MCF 10A (cell line): ENCODE measurements at regions of chr2 and their contacts with region 1.

Region 1: GRCh38 chr2:85888684-85889626 is at the start of gene ST3GAL5:
- DNase-seq: peak; percentile 76
- H3K4me3 Mint-ChIP-seq: peak within 1 kb of the TSS; percentile 90
- H3K27ac Mint-ChIP-seq: no peak within 1 kb of the TSS
- H3K4me1 Mint-ChIP-seq: peaks cover 36% of the 10 kb centered on the region
- H3K27me3 Mint-ChIP-seq: no peaks in the 10 kb centered on the region
- CTCF ChIP-seq: peak; percentile 50
- total RNA-seq, gene ST3GAL5: 1.2 and 2.3 TPM in 2 replicates

Region 2: DNA sequence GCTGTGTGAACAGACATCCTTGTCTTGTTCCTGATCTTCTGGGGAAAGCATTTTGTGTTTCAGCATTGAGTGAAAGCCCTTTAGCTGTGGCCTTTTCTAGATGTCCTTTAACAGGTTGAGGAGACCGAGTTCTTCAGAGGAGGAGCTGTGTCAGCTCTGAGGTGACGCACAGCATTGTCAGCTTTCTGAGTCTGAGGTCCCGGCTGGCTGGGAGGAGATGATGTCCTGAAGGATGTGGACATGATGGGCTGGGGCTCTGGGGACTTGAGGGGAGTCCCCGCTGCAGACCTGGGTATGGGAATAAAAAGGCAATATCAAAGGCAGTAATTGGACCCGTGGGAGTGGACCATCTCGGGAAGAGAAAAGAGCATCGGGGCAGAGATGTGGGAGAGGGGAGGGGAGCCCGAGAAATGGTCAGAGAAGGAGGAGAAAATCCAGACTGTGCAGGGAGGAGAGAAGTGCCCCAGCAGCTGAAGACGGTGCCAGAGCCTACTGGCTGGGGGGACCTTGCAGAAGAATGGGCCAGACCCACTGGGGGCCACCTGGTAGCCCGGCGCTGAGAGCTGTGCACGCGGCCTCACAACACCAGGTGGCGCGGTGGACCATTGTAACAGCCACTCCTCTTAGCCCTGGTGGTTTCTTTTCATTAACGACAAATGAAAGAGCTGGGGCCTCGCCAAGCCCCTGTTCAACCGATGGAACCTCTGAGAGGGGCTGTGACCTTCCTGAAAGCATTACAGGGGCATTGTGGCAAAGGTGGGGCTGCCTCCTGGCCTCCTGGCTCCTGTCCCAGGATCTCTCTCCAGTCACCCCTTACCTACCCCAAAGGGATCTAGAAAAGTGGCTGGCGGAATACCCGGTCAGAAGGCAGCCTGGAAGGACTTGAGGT is 61.7 kb before region 1 on chr2:
- CTCF ChIA-PET with region 1: interaction called, 19 read pairs
- POLR2A ChIA-PET with region 1: interaction called, 7 read pairs
- intact Hi-C with region 1: loop called (anchors 1 kb)
- DNase-seq: peak; percentile 74
- H3K4me3 Mint-ChIP-seq: no peak overlapping the region
- H3K27ac Mint-ChIP-seq: no peak overlapping the region
- H3K4me1 Mint-ChIP-seq: peaks cover 5% of the 10 kb centered on the region
- H3K27me3 Mint-ChIP-seq: peaks cover 7% of the 10 kb centered on the region
- CTCF ChIP-seq: peak; percentile 90

Region 3: GRCh38 chr2:85997017-85997970 is 108.3 kb after region 1 on chr2:
- CTCF ChIA-PET with region 1: interaction called, 15 read pairs
- POLR2A ChIA-PET with region 1: no interaction called
- intact Hi-C with region 1: no loop called
- DNase-seq: no peak
- H3K4me3 Mint-ChIP-seq: no peak overlapping the region
- H3K27ac Mint-ChIP-seq: no peak overlapping the region
- H3K4me1 Mint-ChIP-seq: peaks cover 10% of the 10 kb centered on the region
- H3K27me3 Mint-ChIP-seq: no peaks in the 10 kb centered on the region
- CTCF ChIP-seq: no peak

Region 4: GRCh38 chr2:86020984-86021383 is 132.0 kb after region 1 on chr2:
- CTCF ChIA-PET with region 1: interaction called, 7 read pairs
- POLR2A ChIA-PET with region 1: interaction called, 6 read pairs
- intact Hi-C with region 1: loop called (anchors 5 kb)
- DNase-seq: no peak
- H3K4me3 Mint-ChIP-seq: no peak overlapping the region
- H3K27ac Mint-ChIP-seq: no peak overlapping the region
- H3K4me1 Mint-ChIP-seq: peaks cover 15% of the 10 kb centered on the region
- H3K27me3 Mint-ChIP-seq: no peaks in the 10 kb centered on the region
- CTCF ChIP-seq: no peak

Region 5: GRCh38 chr2:86035883-86036668 is 147.1 kb after region 1 on chr2:
- CTCF ChIA-PET with region 1: interaction called, 20 read pairs
- POLR2A ChIA-PET with region 1: interaction called, 4 read pairs
- intact Hi-C with region 1: no loop called
- DNase-seq: peak; percentile 17
- H3K4me3 Mint-ChIP-seq: no peak overlapping the region
- H3K27ac Mint-ChIP-seq: peak overlapping the region; percentile 65
- H3K4me1 Mint-ChIP-seq: peaks cover 5% of the 10 kb centered on the region
- H3K27me3 Mint-ChIP-seq: no peaks in the 10 kb centered on the region
- CTCF ChIP-seq: no peak

Region 6: DNA sequence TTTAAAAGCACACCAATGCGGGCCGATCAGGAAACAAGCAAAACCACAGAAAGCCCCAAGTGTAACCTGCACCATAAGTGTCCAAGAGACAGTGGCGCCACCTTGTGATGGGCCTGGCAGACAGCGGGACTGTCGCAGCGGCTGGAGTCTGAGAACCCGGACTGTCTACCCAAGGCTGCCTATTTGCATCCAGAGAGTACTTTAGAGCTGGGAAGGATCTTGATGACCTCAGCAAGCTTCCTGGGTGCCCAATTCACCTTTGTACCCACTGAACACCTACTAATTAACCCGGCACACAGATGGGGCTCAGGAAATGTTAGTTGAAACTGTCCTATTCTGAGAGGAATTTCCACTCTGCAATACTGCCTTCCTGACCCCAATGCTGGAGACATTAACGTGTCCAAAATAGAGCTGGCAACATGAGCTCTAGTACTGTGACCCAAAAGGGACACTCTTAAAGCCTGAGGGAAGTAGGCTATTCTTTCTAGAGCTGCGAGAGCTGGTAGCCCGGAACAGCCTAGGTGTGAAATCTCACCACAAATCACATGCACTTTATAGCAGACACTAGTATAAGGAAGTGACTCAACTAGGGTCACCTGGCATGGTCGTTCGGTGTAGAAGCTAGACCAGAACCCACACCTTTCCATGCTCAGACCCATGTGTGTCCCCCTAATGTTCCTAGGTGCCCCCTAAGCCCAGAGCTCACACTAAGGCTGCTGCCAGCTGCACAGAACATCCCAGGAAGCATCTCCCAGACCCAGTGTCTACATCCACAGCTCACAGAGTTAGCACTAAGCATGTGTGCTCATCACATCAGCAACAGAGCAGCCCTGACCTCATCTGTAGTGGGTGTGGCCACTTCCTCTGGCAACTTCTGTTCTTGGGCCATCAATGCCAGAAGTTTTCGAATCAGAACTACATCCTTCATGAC is 191.3 kb after region 1 on chr2:
- CTCF ChIA-PET with region 1: interaction called, 65 read pairs
- POLR2A ChIA-PET with region 1: interaction called, 5 read pairs
- intact Hi-C with region 1: loop called (anchors 1 kb)
- DNase-seq: peak; percentile 68
- H3K4me3 Mint-ChIP-seq: no peak overlapping the region
- H3K27ac Mint-ChIP-seq: no peak overlapping the region
- H3K4me1 Mint-ChIP-seq: no peaks in the 10 kb centered on the region
- H3K27me3 Mint-ChIP-seq: no peaks in the 10 kb centered on the region
- CTCF ChIP-seq: peak; percentile 76

Region 7: GRCh38 chr2:86249579-86250391 is 360.8 kb after region 1 on chr2:
- CTCF ChIA-PET with region 1: no interaction called
- POLR2A ChIA-PET with region 1: no interaction called
- intact Hi-C with region 1: no loop called
- DNase-seq: peak; percentile 65
- H3K4me3 Mint-ChIP-seq: no peak overlapping the region
- H3K27ac Mint-ChIP-seq: peak overlapping the region; percentile 55
- H3K4me1 Mint-ChIP-seq: peaks cover 6% of the 10 kb centered on the region
- H3K27me3 Mint-ChIP-seq: peaks cover 14% of the 10 kb centered on the region
- CTCF ChIP-seq: no peak